ENCODE measurements at regions of chr4 and their contacts with region 1.

Region 1: GRCh38 chr4:82739316-82740179 is 59.0 kb downstream of the SCD5 start:
- DNase-seq: peak; percentile 12
- ATAC-seq: peak; percentile 100
- H3K4me3 ChIP-seq: no peak overlapping the region
- H3K27ac ChIP-seq: no peak overlapping the region
- H3K4me1 ChIP-seq: peaks cover 3% of the 10 kb centered on the region
- H3K27me3 ChIP-seq: no peaks in the 10 kb centered on the region
- CTCF ChIP-seq: peak; percentile 97 to 100 (median 99)
- EP300 ChIP-seq: no peak
- POLR2A ChIP-seq: no peak
- RAD21 ChIP-seq: peak; percentile 89

Region 2: DNA sequence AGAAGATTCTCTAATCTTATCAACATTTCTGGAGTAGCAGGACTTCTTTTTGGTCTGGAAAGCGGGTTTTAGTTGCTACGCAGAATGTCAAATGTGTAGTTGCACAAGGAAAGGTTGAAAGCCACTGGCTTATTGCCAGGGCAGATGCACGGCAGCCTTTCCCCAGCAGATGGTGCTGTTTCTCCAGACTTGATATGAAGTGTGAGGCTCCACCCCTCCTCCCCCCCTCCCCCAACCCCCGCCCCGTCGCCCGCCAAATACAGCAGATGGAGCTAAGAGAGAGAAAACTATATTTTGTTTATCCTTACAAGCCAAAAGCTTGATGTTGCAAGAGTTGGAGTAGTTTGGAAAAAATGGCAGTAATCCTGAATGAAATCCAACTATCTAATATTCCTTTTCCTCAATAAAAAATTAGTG is 277.1 kb before region 1 on chr4:
- CTCF ChIA-PET with region 1: interaction called, 89 read pairs
- POLR2A ChIA-PET with region 1: interaction called, 4 read pairs
- RAD21 ChIA-PET with region 1: interaction called, 17 read pairs
- SMC1A ChIA-PET with region 1: interaction called, 17 read pairs
- in situ Hi-C with region 1: loop called (anchors 5 kb)
- intact Hi-C with region 1: loop called (anchors 1 kb)
- DNase-seq: peak; percentile 54
- ATAC-seq: peak; percentile 99
- H3K4me3 ChIP-seq: no peak overlapping the region
- H3K27ac ChIP-seq: no peak overlapping the region
- H3K4me1 ChIP-seq: no peaks in the 10 kb centered on the region
- H3K27me3 ChIP-seq: no peaks in the 10 kb centered on the region
- CTCF ChIP-seq: peak; percentile 59 to 83 (median 82)
- EP300 ChIP-seq: no peak
- POLR2A ChIP-seq: no peak
- RAD21 ChIP-seq: peak; percentile 71

Region 3: GRCh38 chr4:82721819-82722423 is 17.6 kb before region 1 on chr4:
- CTCF ChIA-PET with region 1: interaction called, 13 read pairs
- POLR2A ChIA-PET with region 1: no interaction called
- RAD21 ChIA-PET with region 1: no interaction called
- SMC1A ChIA-PET with region 1: interaction called, 6 read pairs
- in situ Hi-C with region 1: no loop called
- intact Hi-C with region 1: no loop called
- DNase-seq: no peak
- ATAC-seq: peak; percentile 93
- H3K4me3 ChIP-seq: no peak overlapping the region
- H3K27ac ChIP-seq: no peak overlapping the region
- H3K4me1 ChIP-seq: no peaks in the 10 kb centered on the region
- H3K27me3 ChIP-seq: no peaks in the 10 kb centered on the region
- CTCF ChIP-seq: peak; percentile 58 to 64 (median 61)
- EP300 ChIP-seq: no peak
- POLR2A ChIP-seq: no peak
- RAD21 ChIP-seq: peak; percentile 52

Region 4: GRCh38 chr4:82833696-82834313 is 94.3 kb after region 1 on chr4:
- CTCF ChIA-PET with region 1: no interaction called
- POLR2A ChIA-PET with region 1: no interaction called
- RAD21 ChIA-PET with region 1: no interaction called
- SMC1A ChIA-PET with region 1: no interaction called
- in situ Hi-C with region 1: no loop called
- intact Hi-C with region 1: no loop called
- DNase-seq: no peak
- ATAC-seq: no peak; the same call in 2 of the 3 replicates
- H3K4me3 ChIP-seq: no peak overlapping the region
- H3K27ac ChIP-seq: no peak overlapping the region
- H3K4me1 ChIP-seq: no peaks in the 10 kb centered on the region
- H3K27me3 ChIP-seq: no peaks in the 10 kb centered on the region
- CTCF ChIP-seq: no peak
- EP300 ChIP-seq: no peak
- POLR2A ChIP-seq: no peak
- RAD21 ChIP-seq: no peak

Measured in GM12878 (cell line).